HepG2 (cell line): ENCODE measurements at regions of chr2 and their contacts with region 1.

Region 1: DNA sequence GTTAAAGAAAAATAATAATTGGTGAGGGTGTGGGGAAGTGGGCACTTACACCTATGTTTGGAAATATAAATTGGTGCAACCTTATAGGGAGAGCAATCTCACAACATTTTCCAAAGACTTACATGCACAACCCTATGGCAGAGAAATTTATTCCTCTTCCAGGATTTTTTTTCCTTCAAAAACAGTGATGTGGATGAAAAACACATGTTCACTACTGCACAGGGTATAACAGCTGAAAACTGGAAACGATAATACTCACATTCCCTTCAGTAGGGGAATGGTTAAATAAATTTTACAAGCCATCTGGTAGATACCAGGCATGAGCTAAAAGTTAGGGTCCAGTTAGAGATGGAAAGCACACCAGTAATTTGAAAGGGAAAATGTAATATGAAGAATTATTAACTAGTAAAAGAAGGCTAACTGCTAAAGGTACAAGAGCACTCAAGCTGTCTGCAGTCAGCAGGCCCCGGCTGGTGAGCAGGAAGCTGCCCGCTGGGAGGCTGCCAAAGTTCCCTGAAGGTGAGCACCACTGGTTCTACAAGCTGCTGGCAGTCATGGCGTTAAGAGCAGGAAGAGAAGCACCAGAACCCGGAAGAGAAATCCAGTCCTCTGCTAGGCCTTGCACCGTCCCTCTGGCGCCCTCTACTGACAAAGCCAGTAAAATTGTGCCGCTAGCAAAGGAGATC is 28.4 kb upstream of the CASP8 start:
- DNase-seq: peak; percentile 98
- ATAC-seq: peak; percentile 67
- H3K4me3 ChIP-seq: peak overlapping the region; percentile 35 to 98 (median 89); a peak in 5 of 6 replicates
- H3K27ac ChIP-seq: peak overlapping the region; percentile 78
- H3K4me1 ChIP-seq: peaks cover 36% of the 10 kb centered on the region
- H3K27me3 ChIP-seq: no peaks in the 10 kb centered on the region; a peak in 1 of 5 replicates
- CTCF ChIP-seq: peak; percentile 99
- EP300 ChIP-seq: peak in 1 of 2 experiments; percentile 62; a peak in 3 of 4 replicates
- POLR2A ChIP-seq: peak; percentile 74 to 75
- RAD21 ChIP-seq: peak; percentile 98

Region 2: GRCh38 chr2:200306196-200306930 is 925.6 kb before region 1 on chr2 and contains the start of gene SPATS2L:
- CTCF ChIA-PET with region 1: no interaction called
- POLR2A ChIA-PET with region 1: no interaction called
- in situ Hi-C with region 1: no loop called
- intact Hi-C with region 1: no loop called
- DNase-seq: peak; percentile 95
- ATAC-seq: peak; percentile 72
- H3K4me3 ChIP-seq: peak within 1 kb of the TSS; percentile 84 to 94 (median 88)
- H3K27ac ChIP-seq: peak within 1 kb of the TSS; percentile 96
- H3K4me1 ChIP-seq: peaks cover 72% of the 10 kb centered on the region
- H3K27me3 ChIP-seq: no peaks in the 10 kb centered on the region; a peak in 1 of 5 replicates
- CTCF ChIP-seq: no peak
- EP300 ChIP-seq: peak; percentile 60 to 81; a peak in 3 of 4 replicates
- POLR2A ChIP-seq: peak; percentile 82 to 85
- RAD21 ChIP-seq: no peak
- total RNA-seq, gene SPATS2L: 154 and 165 TPM in 2 replicates

Region 3: DNA sequence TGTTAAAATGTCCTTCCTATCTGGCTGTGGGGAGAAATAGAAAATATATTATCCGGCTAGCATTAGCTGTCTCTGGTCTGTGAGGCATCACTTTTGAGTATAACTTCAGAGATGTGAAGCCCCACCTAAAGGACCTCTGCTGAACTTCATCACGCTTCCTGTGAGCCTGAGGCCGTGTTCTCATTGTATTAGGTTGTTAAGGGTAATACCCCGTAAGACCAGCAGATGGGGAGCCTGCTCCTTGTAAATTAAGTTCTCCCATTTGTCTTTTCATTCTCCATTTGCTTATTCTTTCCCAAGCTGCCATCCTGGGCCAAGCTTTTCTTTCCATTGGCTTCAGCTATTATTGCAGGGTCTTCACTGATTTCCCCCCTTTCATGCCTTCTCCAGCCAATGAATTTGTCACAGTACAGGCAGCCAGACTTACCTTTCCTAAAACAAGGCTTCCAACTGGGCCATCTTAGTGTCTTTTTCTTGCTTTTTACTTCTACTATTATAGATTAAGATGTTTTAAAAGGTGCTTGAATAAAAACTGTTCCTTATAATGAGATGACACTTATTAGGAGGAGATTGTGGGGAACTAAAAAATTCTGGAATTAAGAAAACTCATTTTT is 330.4 kb before region 1 on chr2:
- CTCF ChIA-PET with region 1: no interaction called
- POLR2A ChIA-PET with region 1: interaction called, 6 read pairs
- in situ Hi-C with region 1: no loop called
- intact Hi-C with region 1: loop called (anchors 1 kb)
- DNase-seq: peak; percentile 94
- ATAC-seq: peak; percentile 97
- H3K4me3 ChIP-seq: no peak overlapping the region
- H3K27ac ChIP-seq: no peak overlapping the region
- H3K4me1 ChIP-seq: no peaks in the 10 kb centered on the region
- H3K27me3 ChIP-seq: no peaks in the 10 kb centered on the region
- CTCF ChIP-seq: peak; percentile 92
- EP300 ChIP-seq: no peak
- POLR2A ChIP-seq: no peak
- RAD21 ChIP-seq: peak; percentile 87

Region 4: GRCh38 chr2:200993097-200993496 is 238.8 kb before region 1 on chr2:
- CTCF ChIA-PET with region 1: no interaction called
- POLR2A ChIA-PET with region 1: no interaction called
- in situ Hi-C with region 1: no loop called
- intact Hi-C with region 1: no loop called
- DNase-seq: no peak
- ATAC-seq: no peak
- H3K4me3 ChIP-seq: no peak overlapping the region
- H3K27ac ChIP-seq: no peak overlapping the region
- H3K4me1 ChIP-seq: no peaks in the 10 kb centered on the region
- H3K27me3 ChIP-seq: no peaks in the 10 kb centered on the region
- CTCF ChIP-seq: no peak
- EP300 ChIP-seq: no peak
- POLR2A ChIP-seq: no peak
- RAD21 ChIP-seq: no peak

Region 5: DNA sequence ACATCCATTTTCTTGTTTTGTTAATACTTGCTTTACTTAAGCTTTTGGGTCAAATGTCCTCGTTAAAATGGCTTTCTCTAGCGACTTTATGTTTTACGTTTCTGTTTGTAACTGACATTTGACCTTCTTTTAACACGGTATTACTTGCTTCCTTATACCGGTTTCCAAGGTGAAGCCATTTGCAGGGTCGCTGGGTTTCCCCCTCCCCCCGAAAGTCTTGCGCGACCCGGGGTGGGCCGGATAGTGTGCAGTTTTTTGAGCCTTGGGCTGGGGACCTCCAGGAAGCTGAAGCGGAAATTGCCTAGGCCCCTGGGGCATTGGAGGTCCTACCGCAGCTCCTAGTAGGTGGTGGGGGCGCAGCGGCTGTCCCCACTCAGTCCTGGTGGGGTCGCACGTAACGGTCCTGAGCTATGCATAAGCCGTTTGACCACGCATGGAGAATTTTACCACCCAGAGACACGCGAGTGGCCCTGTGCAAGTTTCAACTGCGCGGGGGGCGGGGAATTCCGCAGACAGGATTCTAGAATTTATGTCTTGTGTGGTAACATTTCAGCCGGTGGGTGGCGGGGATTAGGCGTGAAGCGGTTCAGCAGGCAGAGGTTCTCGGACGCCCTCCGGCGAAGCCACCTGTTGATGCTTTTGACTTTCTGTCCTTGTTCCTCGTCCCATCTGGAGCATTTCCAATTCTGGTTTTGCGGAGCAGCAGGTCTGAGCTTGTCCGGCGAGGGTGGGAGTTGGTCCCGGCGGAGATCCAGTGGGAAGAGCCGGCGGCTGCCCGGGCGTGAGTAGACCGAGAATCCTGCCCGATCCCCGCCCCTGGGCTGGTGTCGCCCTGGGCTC is 113.6 kb before region 1 on chr2:
- CTCF ChIA-PET with region 1: no interaction called
- POLR2A ChIA-PET with region 1: interaction called, 23 read pairs
- in situ Hi-C with region 1: no loop called
- intact Hi-C with region 1: loop called (anchors 2 kb)
- DNase-seq: peak; percentile 88
- ATAC-seq: peak; percentile 47
- H3K4me3 ChIP-seq: peak overlapping the region; percentile 86 to 90 (median 86)
- H3K27ac ChIP-seq: peak overlapping the region; percentile 91
- H3K4me1 ChIP-seq: peaks cover 68% of the 10 kb centered on the region
- H3K27me3 ChIP-seq: no peaks in the 10 kb centered on the region; a peak in 2 of 5 replicates
- CTCF ChIP-seq: peak; percentile 78
- EP300 ChIP-seq: no peak; a peak in 1 of 4 replicates
- POLR2A ChIP-seq: peak; percentile 61 to 68
- RAD21 ChIP-seq: peak; percentile 68

Region 6: GRCh38 chr2:201203916-201204654 is 27.8 kb before region 1 on chr2:
- CTCF ChIA-PET with region 1: no interaction called
- POLR2A ChIA-PET with region 1: interaction called, 102 read pairs
- in situ Hi-C with region 1: no loop called
- intact Hi-C with region 1: loop called (anchors 1 kb)
- DNase-seq: no peak
- ATAC-seq: peak; percentile 28
- H3K4me3 ChIP-seq: peak overlapping the region; percentile 11 to 53 (median 12); a peak in 4 of 6 replicates
- H3K27ac ChIP-seq: peak overlapping the region; percentile 97
- H3K4me1 ChIP-seq: peaks cover 52% of the 10 kb centered on the region
- H3K27me3 ChIP-seq: no peaks in the 10 kb centered on the region
- CTCF ChIP-seq: no peak
- EP300 ChIP-seq: no peak
- POLR2A ChIP-seq: no peak; a peak in 1 of 4 replicates
- RAD21 ChIP-seq: no peak

Region 7: GRCh38 chr2:201363857-201364560 is 132.1 kb after region 1 on chr2:
- CTCF ChIA-PET with region 1: interaction called, 37 read pairs
- POLR2A ChIA-PET with region 1: no interaction called
- in situ Hi-C with region 1: no loop called
- intact Hi-C with region 1: loop called (anchors 1 kb)
- DNase-seq: peak; percentile 64
- ATAC-seq: peak; percentile 90
- H3K4me3 ChIP-seq: no peak overlapping the region
- H3K27ac ChIP-seq: no peak overlapping the region
- H3K4me1 ChIP-seq: no peaks in the 10 kb centered on the region
- H3K27me3 ChIP-seq: no peaks in the 10 kb centered on the region
- CTCF ChIP-seq: peak; percentile 90
- EP300 ChIP-seq: no peak
- POLR2A ChIP-seq: no peak
- RAD21 ChIP-seq: peak; percentile 77

Region 8: DNA sequence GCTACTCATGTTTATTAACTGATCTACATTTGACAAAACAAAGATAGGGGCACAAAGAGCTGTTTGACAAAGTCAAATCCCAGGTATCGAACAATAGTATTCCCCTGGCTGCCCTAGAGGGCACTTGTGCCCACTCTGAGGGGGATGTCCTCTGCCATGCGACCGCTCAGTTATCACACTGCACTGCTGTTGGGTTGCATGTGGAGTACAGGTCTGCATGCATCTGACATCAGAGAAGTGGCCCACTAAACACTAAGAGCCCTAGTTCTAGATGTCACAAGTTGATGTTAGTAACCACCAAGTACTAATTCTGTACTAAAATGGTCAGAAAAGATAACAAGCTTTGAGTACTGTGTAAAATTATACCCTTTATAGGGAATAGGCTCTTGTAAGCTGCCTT is 145.3 kb after region 1 on chr2:
- CTCF ChIA-PET with region 1: no interaction called
- POLR2A ChIA-PET with region 1: no interaction called
- in situ Hi-C with region 1: no loop called
- intact Hi-C with region 1: no loop called
- DNase-seq: no peak
- ATAC-seq: peak; percentile 45; the same call in 2 of the 3 replicates
- H3K4me3 ChIP-seq: no peak overlapping the region
- H3K27ac ChIP-seq: no peak overlapping the region
- H3K4me1 ChIP-seq: no peaks in the 10 kb centered on the region
- H3K27me3 ChIP-seq: no peaks in the 10 kb centered on the region
- CTCF ChIP-seq: no peak
- EP300 ChIP-seq: no peak
- POLR2A ChIP-seq: no peak
- RAD21 ChIP-seq: no peak

Region 9: GRCh38 chr2:201715483-201715882 is 483.6 kb after region 1 on chr2:
- CTCF ChIA-PET with region 1: interaction called, 3 read pairs
- POLR2A ChIA-PET with region 1: no interaction called
- in situ Hi-C with region 1: no loop called
- intact Hi-C with region 1: loop called (anchors 1 kb)
- DNase-seq: peak; percentile 25
- ATAC-seq: peak; percentile 90
- H3K4me3 ChIP-seq: no peak overlapping the region
- H3K27ac ChIP-seq: no peak overlapping the region
- H3K4me1 ChIP-seq: peaks cover 10% of the 10 kb centered on the region
- H3K27me3 ChIP-seq: no peaks in the 10 kb centered on the region
- CTCF ChIP-seq: peak; percentile 74
- EP300 ChIP-seq: no peak
- POLR2A ChIP-seq: no peak
- RAD21 ChIP-seq: no peak